ENCODE measurements at regions of chr5 and their contacts with region 1.

Region 1: DNA sequence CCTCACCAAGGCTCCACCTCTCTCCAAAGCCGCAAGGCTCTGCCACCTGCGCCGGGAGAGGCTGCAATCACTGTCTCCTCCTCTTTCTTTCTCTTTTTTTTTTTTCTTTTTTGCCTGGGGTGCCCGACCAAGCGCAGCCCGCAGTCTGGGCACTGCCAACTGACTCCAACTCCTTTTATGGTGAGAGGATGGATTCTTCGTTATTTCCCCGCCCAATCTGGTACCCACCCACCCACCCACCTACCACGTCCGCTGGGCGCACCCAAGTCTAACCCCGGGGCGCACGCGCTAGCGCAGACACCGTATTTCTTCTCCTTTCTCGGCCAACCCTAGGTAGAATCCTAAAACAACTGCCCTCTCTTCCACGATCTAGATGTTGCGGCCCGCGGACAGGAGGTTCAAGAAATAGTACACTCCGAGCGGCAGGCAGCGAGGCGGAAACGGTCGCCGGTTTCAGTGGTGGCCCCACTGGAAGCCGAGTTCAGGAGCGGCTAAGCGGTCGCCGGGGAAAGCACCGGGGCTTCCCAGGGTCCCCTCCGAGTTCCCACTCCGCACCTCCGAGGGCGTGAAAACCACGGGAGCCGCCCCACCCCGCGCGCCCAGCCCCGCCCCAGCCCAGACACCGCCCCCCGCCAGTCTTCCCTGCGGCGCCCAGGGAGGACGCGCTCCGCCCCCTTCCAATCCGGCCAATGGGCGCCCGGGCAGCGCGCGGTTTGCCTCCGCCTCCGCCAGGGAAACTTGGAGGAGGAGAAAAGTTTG is 381 bp upstream of the PTGER4 start:
- DNase-seq: peak; percentile 80 to 94 (median 92)
- ATAC-seq: peak; percentile 69
- H3K4me3 ChIP-seq: peak overlapping the region; percentile 77 to 92
- H3K4me3 Mint-ChIP-seq: peak overlapping the region; percentile 94
- H3K27ac ChIP-seq: peak overlapping the region; percentile 89 to 91
- H3K27ac Mint-ChIP-seq: peak overlapping the region; percentile 92
- H3K4me1 ChIP-seq: peaks cover 30% of the 10 kb centered on the region
- H3K4me1 Mint-ChIP-seq: peaks cover 55% of the 10 kb centered on the region
- H3K27me3 ChIP-seq: no peaks in the 10 kb centered on the region
- H3K27me3 Mint-ChIP-seq: no peaks in the 10 kb centered on the region
- CTCF ChIP-seq: no peak

Region 2: DNA sequence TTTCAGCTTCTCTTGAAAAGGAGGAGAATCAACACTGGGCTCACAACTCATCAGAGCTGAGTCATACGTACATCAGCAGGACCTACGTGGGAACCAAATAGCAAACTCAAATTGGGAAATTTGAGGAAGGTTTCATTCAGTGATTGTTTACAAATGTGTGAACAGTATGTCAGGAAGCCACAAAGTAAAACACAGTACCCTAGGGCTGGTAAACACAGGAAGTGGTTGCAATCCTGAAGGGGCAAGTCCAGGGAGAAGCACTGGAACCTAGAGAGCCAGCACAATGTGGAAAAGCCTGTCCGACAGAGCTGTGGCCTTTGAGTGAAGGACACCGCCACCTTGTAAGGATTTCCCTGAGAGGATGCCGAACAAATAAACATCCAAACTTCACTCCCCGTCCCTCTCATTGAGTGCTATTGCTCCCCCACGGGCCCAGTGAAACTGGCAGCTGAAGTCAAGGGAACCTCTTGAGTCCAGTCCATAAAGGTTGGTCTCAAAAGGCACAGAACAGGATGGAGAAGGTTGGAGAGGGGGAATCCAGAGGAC is 1578.4 kb before region 1 on chr5:
- CTCF ChIA-PET with region 1: no interaction called
- POLR2A ChIA-PET with region 1: no interaction called
- intact Hi-C with region 1: no loop called
- DNase-seq: peak in 2 of 9 experiments; percentile 10 to 43
- ATAC-seq: no peak
- H3K4me3 ChIP-seq: no peak overlapping the region
- H3K4me3 Mint-ChIP-seq: no peak overlapping the region
- H3K27ac ChIP-seq: peak overlapping the region in 1 of 2 experiments; percentile 47
- H3K27ac Mint-ChIP-seq: peak overlapping the region; percentile 89
- H3K4me1 ChIP-seq: peaks cover 15% of the 10 kb centered on the region
- H3K4me1 Mint-ChIP-seq: peaks cover 36% of the 10 kb centered on the region
- H3K27me3 ChIP-seq: no peaks in the 10 kb centered on the region
- H3K27me3 Mint-ChIP-seq: no peaks in the 10 kb centered on the region
- CTCF ChIP-seq: no peak

Region 3: DNA sequence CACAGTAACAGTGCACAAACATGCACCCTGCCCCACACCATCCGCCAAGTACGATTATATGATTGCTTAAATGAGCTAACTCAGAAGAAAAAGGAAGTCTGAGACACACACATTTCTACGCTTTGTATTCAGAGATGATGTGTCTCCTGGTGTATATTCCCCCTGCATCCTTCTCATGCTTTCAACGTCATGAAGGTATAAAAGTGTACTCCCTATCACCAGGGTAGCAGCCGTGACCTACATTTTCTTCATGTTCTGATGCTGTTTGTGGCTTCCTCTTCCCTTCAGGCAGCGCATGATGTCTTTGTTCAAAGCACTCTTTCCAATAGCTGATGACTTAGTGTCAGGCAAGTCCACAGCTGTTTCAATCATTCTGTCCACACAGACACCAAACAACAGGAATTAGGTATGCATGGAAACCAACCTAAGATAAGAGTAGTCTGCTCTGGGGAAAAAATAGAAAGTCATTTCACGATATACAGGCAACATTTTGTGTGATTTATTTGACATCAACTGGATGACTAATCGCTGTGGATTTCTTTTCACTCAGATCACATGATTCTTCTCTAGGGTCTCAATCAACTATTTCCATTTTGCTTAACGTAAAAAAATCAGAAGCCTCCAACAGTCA is 269.0 kb before region 1 on chr5:
- CTCF ChIA-PET with region 1: interaction called, 8 read pairs
- POLR2A ChIA-PET with region 1: interaction called, 19 read pairs
- intact Hi-C with region 1: loop called (anchors 1 to 2 kb)
- DNase-seq: peak; percentile 46 to 98 (median 69)
- ATAC-seq: peak; percentile 81
- H3K4me3 ChIP-seq: peak overlapping the region; percentile 30 to 31
- H3K4me3 Mint-ChIP-seq: peak overlapping the region; percentile 65
- H3K27ac ChIP-seq: peak overlapping the region; percentile 96 to 97
- H3K27ac Mint-ChIP-seq: peak overlapping the region; percentile 99
- H3K4me1 ChIP-seq: peaks cover 59% of the 10 kb centered on the region
- H3K4me1 Mint-ChIP-seq: peaks cover 63% of the 10 kb centered on the region
- H3K27me3 ChIP-seq: no peaks in the 10 kb centered on the region
- H3K27me3 Mint-ChIP-seq: no peaks in the 10 kb centered on the region
- CTCF ChIP-seq: no peak

Region 4: GRCh38 chr5:40578501-40579451 is 100.6 kb before region 1 on chr5:
- CTCF ChIA-PET with region 1: no interaction called
- POLR2A ChIA-PET with region 1: interaction called, 3 read pairs
- intact Hi-C with region 1: loop called in 1 of 2 experiments (anchors 5 kb)
- DNase-seq: peak in 2 of 9 experiments; percentile 5 to 29
- ATAC-seq: no peak
- H3K4me3 ChIP-seq: no peak overlapping the region
- H3K4me3 Mint-ChIP-seq: peak overlapping the region; percentile 79
- H3K27ac ChIP-seq: no peak overlapping the region
- H3K27ac Mint-ChIP-seq: peak overlapping the region; percentile 49
- H3K4me1 ChIP-seq: peaks cover 9% of the 10 kb centered on the region
- H3K4me1 Mint-ChIP-seq: peaks cover 21% of the 10 kb centered on the region
- H3K27me3 ChIP-seq: no peaks in the 10 kb centered on the region
- H3K27me3 Mint-ChIP-seq: no peaks in the 10 kb centered on the region
- CTCF ChIP-seq: no peak

Region 5: DNA sequence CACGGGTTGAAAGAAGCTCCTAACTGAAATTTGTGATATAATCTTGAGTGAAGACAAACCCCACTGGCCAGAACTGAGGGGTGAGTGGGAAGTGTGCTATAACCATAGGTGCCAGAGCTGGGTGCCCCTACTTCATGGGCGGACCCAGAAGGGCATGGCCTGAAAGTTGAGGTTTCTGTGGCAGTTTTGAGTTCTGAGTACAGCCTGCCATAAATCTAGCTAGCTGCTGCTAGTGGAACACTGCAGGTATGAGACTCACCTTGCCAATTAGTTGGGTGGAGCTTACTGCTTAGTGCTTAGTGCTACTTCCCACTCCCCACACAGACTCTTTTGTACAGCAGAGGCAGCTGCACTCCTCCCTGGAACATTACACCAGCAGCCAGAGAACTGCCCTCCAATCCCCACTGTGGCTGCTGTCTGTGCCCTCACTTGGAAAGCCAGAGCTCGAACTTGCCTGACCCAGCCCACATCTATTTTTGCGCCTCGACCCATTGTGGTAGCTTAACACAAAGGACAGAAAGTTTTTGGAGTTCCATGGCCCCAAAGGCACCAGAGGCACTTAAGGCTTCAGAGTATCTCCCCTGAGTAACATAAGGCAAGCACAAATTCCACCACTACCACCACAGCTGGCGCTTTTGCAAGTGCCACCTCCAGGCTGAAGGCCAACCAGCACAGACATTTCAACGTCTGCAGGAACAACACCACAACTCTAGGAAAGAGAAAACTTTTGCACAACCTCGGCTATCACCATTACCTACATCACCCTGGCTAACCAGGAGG is 26.7 kb before region 1 on chr5:
- CTCF ChIA-PET with region 1: interaction called, 8 read pairs
- POLR2A ChIA-PET with region 1: interaction called, 42 read pairs
- intact Hi-C with region 1: loop called in 1 of 2 experiments (anchors 1 kb)
- DNase-seq: peak in 3 of 9 experiments; percentile 41 to 58 (median 44)
- ATAC-seq: peak; percentile 39
- H3K4me3 ChIP-seq: no peak overlapping the region
- H3K4me3 Mint-ChIP-seq: peak overlapping the region; percentile 79
- H3K27ac ChIP-seq: peak overlapping the region; percentile 38 to 71
- H3K27ac Mint-ChIP-seq: peak overlapping the region; percentile 93
- H3K4me1 ChIP-seq: peaks cover 56% of the 10 kb centered on the region
- H3K4me1 Mint-ChIP-seq: peaks cover 78% of the 10 kb centered on the region
- H3K27me3 ChIP-seq: no peaks in the 10 kb centered on the region
- H3K27me3 Mint-ChIP-seq: no peaks in the 10 kb centered on the region
- CTCF ChIP-seq: no peak

Region 6: DNA sequence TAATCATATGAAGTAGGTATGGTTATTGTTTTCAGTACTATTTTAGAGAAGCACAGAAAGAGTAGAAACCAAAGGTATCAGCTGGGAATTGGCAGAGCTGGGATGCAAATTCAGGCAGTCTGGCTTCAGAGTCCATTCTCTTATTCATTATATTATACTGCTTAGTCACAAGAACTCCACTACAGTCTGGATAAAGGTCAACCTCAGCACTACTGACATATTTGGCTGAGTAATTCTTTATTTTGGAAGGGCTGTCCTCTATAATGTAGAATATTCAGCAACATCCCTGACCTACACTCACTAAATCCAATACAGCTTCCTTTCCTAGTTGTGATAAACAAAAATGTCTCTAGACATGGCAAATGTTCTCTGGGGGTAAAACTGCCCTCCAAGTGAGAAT is 37.9 kb after region 1 on chr5:
- CTCF ChIA-PET with region 1: no interaction called
- POLR2A ChIA-PET with region 1: no interaction called
- intact Hi-C with region 1: no loop called
- DNase-seq: no peak
- ATAC-seq: no peak
- H3K4me3 ChIP-seq: no peak overlapping the region
- H3K4me3 Mint-ChIP-seq: no peak overlapping the region
- H3K27ac ChIP-seq: no peak overlapping the region
- H3K27ac Mint-ChIP-seq: no peak overlapping the region
- H3K4me1 ChIP-seq: no peaks in the 10 kb centered on the region
- H3K4me1 Mint-ChIP-seq: peaks cover 8% of the 10 kb centered on the region
- H3K27me3 ChIP-seq: no peaks in the 10 kb centered on the region
- H3K27me3 Mint-ChIP-seq: no peaks in the 10 kb centered on the region
- CTCF ChIP-seq: no peak

Region 7: GRCh38 chr5:40834849-40835787 is 155.8 kb after region 1 on chr5 and contains the start of gene RPL37:
- CTCF ChIA-PET with region 1: no interaction called
- POLR2A ChIA-PET with region 1: no interaction called
- intact Hi-C with region 1: loop called (anchors 5 kb)
- DNase-seq: peak; percentile 81 to 96 (median 90)
- ATAC-seq: peak; percentile 84
- H3K4me3 ChIP-seq: peak within 1 kb of the TSS; percentile 87 to 94
- H3K4me3 Mint-ChIP-seq: peak within 1 kb of the TSS; percentile 97
- H3K27ac ChIP-seq: peak within 1 kb of the TSS; percentile 89 to 99
- H3K27ac Mint-ChIP-seq: peak within 1 kb of the TSS; percentile 98
- H3K4me1 ChIP-seq: peaks cover 20% of the 10 kb centered on the region
- H3K4me1 Mint-ChIP-seq: peaks cover 45% of the 10 kb centered on the region
- H3K27me3 ChIP-seq: peaks cover 0 to 3% of the 10 kb centered on the region in 2 experiments
- H3K27me3 Mint-ChIP-seq: no peaks in the 10 kb centered on the region
- CTCF ChIP-seq: no peak
- total RNA-seq, gene RPL37: 2,804 to 2,873 TPM

Measured in CD8-positive, alpha-beta T cell (primary cell).